ENCODE measurements at regions of chr17 and their contacts with region 1.

Region 1: GRCh38 chr17:38379438-38379837 is 27.8 kb downstream of the SOCS7 start:
- DNase-seq: no peak
- H3K4me3 ChIP-seq: no peak overlapping the region
- H3K27ac ChIP-seq: no peak overlapping the region
- H3K4me1 ChIP-seq: no peaks in the 10 kb centered on the region
- H3K27me3 ChIP-seq: no peaks in the 10 kb centered on the region
- CTCF ChIP-seq: no peak

Region 2: DNA sequence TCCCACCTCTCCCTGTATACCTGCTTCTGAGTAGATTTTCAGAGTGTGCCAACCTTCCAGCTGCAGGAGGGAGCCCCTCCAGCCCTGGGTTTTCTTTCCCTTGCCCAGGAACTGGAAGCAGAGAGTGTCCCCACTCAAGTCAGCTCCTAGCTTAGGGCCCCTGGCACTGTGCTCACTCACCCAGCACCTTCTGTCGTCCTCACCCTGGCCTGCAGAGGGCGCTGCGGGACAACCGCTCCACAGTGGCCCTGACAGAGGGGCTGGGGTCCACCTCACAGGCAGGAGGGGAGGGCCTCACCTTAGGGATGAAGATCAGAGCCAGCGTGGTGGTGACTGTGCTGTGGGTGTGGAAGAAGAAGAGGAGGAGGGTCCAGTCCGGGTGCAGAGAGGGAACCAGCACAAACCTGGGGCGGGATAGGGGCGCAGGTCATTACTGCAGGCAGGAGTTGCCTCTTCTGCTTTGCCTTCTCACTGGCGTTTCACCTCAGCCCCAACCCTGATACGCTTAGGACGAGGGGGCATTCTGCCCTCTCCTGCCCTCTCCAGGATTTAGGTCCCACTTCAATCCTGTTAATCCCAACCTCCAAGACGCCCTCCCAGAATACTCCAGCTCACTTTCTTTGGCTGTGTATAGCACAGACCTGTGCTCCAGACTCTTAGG is 45.7 kb before region 1 on chr17:
- CTCF ChIA-PET with region 1: no interaction called
- POLR2A ChIA-PET with region 1: interaction called, 10 read pairs
- intact Hi-C with region 1: no loop called
- DNase-seq: peak; percentile 28
- H3K4me3 ChIP-seq: no peak overlapping the region
- H3K27ac ChIP-seq: no peak overlapping the region
- H3K4me1 ChIP-seq: no peaks in the 10 kb centered on the region
- H3K27me3 ChIP-seq: no peaks in the 10 kb centered on the region
- CTCF ChIP-seq: peak; percentile 76

Region 3: GRCh38 chr17:38428112-38428642 is 48.7 kb after region 1 on chr17 and contains the start of gene ARHGAP23:
- CTCF ChIA-PET with region 1: no interaction called
- POLR2A ChIA-PET with region 1: no interaction called
- intact Hi-C with region 1: no loop called
- DNase-seq: peak; percentile 6
- H3K4me3 ChIP-seq: peak within 1 kb of the TSS; percentile 54
- H3K27ac ChIP-seq: no peak within 1 kb of the TSS
- H3K4me1 ChIP-seq: no peaks in the 10 kb centered on the region
- H3K27me3 ChIP-seq: no peaks in the 10 kb centered on the region
- CTCF ChIP-seq: no peak
- total RNA-seq, gene ARHGAP23: 19.0 and 24.9 TPM in 2 replicates

Region 4: DNA sequence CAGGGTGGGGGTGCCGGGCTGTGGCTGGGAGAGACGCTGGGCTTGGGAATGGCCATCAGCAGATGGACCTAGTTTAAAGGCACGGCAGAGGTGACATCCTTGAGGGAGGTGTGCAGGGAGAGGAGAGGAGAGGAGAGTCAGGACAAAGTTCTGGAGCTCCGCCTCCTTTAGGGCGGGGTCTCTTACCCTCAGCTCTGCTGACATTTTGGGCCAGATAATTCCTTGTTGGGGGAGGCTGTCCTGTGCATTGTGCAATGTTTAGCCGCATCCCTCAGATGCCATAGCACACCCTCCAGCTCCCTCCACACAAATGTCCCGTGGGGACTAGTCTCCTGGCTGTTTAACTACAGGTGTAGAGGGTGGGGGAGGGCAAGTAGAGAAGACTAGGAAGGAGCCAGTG is 97.1 kb after region 1 on chr17:
- CTCF ChIA-PET with region 1: no interaction called
- POLR2A ChIA-PET with region 1: no interaction called
- intact Hi-C with region 1: no loop called
- DNase-seq: no peak
- H3K4me3 ChIP-seq: no peak overlapping the region
- H3K27ac ChIP-seq: no peak overlapping the region
- H3K4me1 ChIP-seq: no peaks in the 10 kb centered on the region
- H3K27me3 ChIP-seq: no peaks in the 10 kb centered on the region
- CTCF ChIP-seq: no peak